PC-3 (cell line): ENCODE measurements at regions of chr2 and their contacts with region 1.

Region 1: GRCh38 chr2:101387151-101387807 is at the start of gene CREG2:
- DNase-seq: peak; percentile 78
- ATAC-seq: peak; percentile 64
- H3K4me3 ChIP-seq: peak within 1 kb of the TSS; percentile 90
- H3K27ac ChIP-seq: peak within 1 kb of the TSS; percentile 98
- H3K4me1 ChIP-seq: peaks cover 40% of the 10 kb centered on the region
- H3K27me3 ChIP-seq: no peaks in the 10 kb centered on the region
- CTCF ChIP-seq: peak; percentile 62
- total RNA-seq, gene CREG2: 40.0 and 67.9 TPM in 2 replicates

Region 2: DNA sequence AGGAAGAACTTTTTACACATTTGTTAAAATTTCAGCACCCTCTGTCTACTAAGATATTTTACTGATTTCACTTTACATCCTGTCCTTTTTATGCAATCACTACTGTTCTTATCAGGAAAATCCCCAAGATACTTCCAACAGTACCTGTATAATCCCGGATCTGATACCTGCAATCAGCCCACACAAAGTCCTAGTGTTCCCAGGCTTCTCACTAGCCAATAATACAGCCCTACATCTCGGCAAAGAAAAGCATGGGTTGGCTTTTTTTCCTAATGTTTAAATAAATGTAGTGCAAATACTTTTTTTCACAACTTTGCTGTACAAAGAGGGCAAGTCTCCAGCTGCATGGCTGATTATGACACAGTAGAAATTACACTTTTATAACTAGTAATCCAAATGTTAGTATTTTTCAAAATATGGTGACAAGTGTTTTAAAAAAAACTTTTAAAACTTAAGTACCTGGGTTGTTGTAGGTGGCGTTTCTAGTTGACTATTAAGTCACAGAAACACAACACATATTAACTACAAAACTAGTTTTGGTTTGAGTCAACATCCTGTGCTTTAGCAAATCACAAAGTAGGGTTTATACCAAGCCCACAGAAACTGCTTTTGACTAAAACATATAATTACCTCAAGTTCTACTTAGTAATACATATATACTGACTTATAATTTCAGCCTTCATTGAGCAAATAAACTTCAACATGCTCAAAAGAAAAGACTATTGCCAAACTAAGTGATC is 115.1 kb before region 1 on chr2:
- CTCF ChIA-PET with region 1: no interaction called
- POLR2A ChIA-PET with region 1: no interaction called
- intact Hi-C with region 1: loop called (anchors 10 kb)
- DNase-seq: no peak
- ATAC-seq: no peak
- H3K4me3 ChIP-seq: no peak overlapping the region
- H3K27ac ChIP-seq: no peak overlapping the region
- H3K4me1 ChIP-seq: peaks cover 3% of the 10 kb centered on the region; the same call in 1 of the 2 replicates
- H3K27me3 ChIP-seq: no peaks in the 10 kb centered on the region
- CTCF ChIP-seq: no peak

Region 3: DNA sequence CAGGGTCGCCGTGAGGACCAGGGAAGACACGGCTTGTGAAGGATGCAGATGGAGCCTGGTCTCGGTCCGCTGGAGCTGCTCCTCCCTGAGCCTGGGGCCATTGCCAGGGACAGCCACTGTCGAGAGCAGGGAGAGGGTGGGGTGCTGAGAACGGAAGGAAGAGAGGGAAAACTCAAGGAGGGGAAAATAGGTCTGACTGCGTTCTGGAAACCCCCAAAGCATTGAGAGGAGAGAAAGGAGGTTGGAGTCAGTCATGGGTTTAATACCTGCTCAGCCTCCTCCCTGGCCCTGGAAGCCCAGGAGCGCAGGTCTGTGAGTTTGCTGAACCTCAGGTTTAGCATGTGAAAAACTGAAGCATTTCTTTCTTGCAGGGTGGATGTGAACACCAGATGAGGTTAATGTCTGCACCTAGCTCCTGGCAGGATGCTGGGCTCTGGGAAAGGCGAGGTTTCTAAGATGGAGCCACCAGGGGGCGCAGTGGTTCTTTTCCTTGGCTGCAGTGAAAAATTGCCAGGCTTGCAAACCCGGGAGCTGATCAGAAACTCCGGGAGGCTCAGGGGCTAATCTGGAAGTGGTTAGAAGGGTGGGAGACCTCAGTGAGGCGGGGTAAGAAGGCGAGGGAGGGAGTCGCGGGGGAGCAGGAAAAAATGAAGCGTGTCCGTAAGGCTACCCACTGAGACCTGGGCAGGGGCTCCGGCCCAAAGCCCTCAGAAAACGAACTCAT is 45.2 kb before region 1 on chr2:
- CTCF ChIA-PET with region 1: interaction called, 31 read pairs
- POLR2A ChIA-PET with region 1: no interaction called
- intact Hi-C with region 1: loop called (anchors 2 kb)
- DNase-seq: peak; percentile 90
- ATAC-seq: peak; percentile 87
- H3K4me3 ChIP-seq: no peak overlapping the region; the same call in 1 of the 2 replicates
- H3K27ac ChIP-seq: peak overlapping the region; percentile 35
- H3K4me1 ChIP-seq: peaks cover 42% of the 10 kb centered on the region
- H3K27me3 ChIP-seq: no peaks in the 10 kb centered on the region
- CTCF ChIP-seq: peak; percentile 92

Region 4: GRCh38 chr2:101349893-101350662 is 37.2 kb before region 1 on chr2:
- CTCF ChIA-PET with region 1: interaction called, 13 read pairs
- POLR2A ChIA-PET with region 1: no interaction called
- intact Hi-C with region 1: loop called (anchors 2 kb)
- DNase-seq: peak; percentile 58
- ATAC-seq: peak; percentile 78
- H3K4me3 ChIP-seq: no peak overlapping the region
- H3K27ac ChIP-seq: 0 out of 2 replicates have a peak overlapping the region, but pooled peaks have one; percentile 1
- H3K4me1 ChIP-seq: peaks cover 11% of the 10 kb centered on the region
- H3K27me3 ChIP-seq: no peaks in the 10 kb centered on the region
- CTCF ChIP-seq: peak; percentile 68

Region 5: DNA sequence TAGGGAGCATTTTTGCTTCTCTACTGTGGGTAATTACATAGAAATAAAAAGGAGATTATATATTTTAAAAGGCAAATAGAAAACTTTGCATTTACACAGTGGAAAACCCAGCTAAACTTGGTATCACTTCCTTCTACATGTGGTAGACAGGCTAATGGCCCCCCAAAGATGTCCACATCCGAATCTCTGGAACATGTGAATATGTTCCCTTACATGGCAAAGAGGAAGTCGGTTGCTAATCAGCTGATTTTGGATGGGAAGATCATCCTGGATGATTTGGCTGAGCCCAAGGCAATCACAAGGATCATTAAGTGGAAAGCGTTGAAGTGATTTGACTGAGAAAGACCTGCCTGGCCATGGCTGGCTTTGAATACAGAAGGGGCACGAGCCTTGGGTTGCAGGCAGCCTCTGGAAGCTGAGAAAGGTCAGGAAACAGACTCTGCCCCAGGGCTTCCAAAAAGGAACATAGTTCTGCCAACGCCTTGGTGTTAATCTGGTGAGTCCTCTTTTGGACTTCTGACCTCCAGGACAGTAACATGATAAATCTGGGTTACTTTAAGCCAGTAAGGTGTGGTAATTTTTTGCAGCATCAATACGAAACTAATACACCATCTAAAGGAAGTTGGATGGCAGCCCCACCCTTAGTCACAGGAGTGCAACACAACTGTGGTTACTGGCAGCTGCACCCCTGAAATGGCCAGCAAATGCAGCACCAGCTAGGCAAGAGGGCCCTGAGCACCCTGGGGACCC is 26.0 kb before region 1 on chr2:
- CTCF ChIA-PET with region 1: no interaction called
- POLR2A ChIA-PET with region 1: no interaction called
- intact Hi-C with region 1: no loop called
- DNase-seq: peak; percentile 40
- ATAC-seq: no peak; the same call in 1 of the 2 replicates
- H3K4me3 ChIP-seq: no peak overlapping the region
- H3K27ac ChIP-seq: peak overlapping the region; percentile 88
- H3K4me1 ChIP-seq: peaks cover 44% of the 10 kb centered on the region
- H3K27me3 ChIP-seq: no peaks in the 10 kb centered on the region
- CTCF ChIP-seq: no peak

Region 6: DNA sequence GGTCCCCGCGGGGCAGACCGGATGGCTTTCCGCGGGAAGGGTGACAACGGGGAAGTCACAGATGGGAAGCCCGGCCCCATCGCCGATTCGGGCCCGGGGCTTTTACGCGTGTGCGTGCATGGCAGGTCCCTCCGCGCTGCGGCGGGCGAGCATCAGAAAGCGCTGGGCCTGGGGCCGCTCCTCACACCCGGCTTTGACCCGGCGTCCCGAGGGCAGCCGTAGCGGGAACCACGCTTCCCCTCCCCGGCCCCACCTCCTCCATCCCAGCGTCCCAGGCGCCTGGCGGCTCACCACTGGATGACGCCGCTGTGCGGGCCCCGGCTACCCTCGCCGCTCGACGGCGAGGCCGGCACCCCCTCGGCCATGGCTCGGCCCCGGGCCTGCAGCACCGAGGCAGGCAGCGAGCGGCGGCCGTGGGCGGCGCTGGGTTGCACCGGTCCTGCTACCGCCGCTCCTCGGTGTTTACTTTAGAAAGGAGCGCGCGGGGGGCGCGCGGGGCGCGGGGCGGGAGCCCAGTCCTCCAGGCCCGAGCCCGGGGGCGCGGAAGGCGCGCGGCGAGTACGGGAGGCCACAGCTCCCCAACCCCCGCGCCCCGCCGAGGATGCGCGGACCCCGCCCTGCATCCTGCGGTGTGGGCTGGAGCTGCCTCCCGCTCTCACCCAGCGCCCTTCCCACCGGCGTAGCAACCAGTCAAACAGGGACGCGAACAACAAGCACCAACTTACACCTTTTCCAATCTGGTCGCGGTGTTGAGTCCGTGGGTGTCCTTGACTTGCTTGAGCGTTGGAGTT is 86.8 kb after region 1 on chr2:
- CTCF ChIA-PET with region 1: no interaction called
- POLR2A ChIA-PET with region 1: no interaction called
- intact Hi-C with region 1: no loop called
- DNase-seq: peak; percentile 23
- ATAC-seq: peak; percentile 82
- H3K4me3 ChIP-seq: peak overlapping the region; percentile 69
- H3K27ac ChIP-seq: peak overlapping the region; percentile 10; the same call in 1 of the 2 replicates
- H3K4me1 ChIP-seq: peaks cover 11% of the 10 kb centered on the region; the same call in 1 of the 2 replicates
- H3K27me3 ChIP-seq: no peaks in the 10 kb centered on the region
- CTCF ChIP-seq: no peak

Region 7: DNA sequence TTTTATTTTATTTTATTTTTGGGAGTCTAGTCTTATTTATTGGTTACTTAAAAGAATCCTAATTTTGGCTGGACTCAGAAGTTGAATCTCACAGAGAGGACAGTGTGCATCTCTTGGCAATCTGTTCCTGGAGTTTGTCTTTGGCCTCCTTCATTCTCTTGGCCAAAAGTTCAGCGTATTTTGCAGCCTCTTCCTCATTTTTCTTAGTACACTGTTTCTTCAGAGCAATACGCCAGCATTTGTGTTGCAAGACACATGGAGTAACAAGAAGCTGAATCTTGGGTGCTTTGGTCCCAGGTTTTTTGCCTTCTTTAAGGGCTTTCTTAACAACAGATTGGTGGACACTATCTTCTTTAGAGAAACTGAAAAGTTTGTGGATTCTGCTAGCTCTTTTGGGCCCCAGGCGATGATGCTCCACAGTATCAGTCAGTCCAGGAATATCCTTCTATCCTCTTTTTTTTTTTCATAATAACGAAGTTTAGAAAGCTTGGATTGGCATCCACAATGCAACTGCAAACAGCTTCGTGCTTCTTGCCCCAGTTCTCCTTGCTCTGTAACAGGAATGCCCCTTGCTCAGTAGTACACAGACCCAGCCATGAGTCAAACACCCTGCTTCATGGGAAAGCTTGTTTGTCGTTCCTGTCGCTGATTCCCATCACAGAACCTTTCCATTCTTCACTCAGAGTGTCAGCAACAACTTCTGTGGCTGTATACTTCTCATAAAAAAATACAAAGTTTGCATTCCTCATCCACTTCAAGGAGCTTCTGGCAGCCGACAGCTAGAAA is 122.4 kb after region 1 on chr2:
- CTCF ChIA-PET with region 1: no interaction called
- POLR2A ChIA-PET with region 1: no interaction called
- intact Hi-C with region 1: no loop called
- DNase-seq: no peak
- ATAC-seq: no peak
- H3K4me3 ChIP-seq: no peak overlapping the region
- H3K27ac ChIP-seq: no peak overlapping the region
- H3K4me1 ChIP-seq: no peaks in the 10 kb centered on the region
- H3K27me3 ChIP-seq: no peaks in the 10 kb centered on the region
- CTCF ChIP-seq: no peak